Head of caudate nucleus (tissue), 42 donors: ENCODE measurements at regions of chr1 and their contacts with region 1.

Region 1: GRCh38 chr1:201955009-201955728 is at the start of gene TIMM17A:
- DNase-seq: peak; percentile 95 to 99 (median 98)

Region 2: GRCh38 chr1:201828820-201829774 is 126.1 kb before region 1 on chr1 and contains the start of gene IPO9:
- intact Hi-C with region 1: loop called (anchors 5 kb)
- DNase-seq: peak; percentile 85 to 98 (median 94)

Region 3: DNA sequence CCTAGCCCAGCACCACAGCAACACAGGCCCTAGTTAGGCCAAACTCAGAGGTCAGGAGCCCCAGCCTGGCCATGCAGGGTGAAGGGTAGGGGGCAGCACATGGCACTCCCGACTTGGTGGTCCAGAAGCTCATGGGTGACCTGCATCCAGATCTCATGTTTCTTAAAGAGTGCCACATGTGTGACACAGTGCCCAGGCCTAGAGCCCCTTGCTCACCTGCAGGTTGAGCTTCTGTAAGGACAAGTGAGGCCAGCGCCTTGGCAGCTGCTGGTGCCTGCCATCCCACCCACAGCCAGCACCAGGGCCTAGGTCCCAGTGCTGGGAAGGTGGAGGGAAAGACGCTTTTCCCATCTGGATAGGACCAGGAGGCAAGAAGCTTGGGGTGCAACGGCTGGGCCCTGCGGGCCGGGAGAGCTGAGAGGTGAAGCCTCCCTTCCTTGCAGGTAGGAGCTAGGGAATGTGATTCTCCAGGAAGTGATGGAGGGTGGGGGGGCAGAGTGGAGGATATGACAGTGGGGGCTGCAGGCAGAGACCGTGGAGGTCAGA is 60.0 kb before region 1 on chr1:
- intact Hi-C with region 1: no loop called
- DNase-seq: no peak

Region 4: GRCh38 chr1:201999625-202000238 is 44.6 kb after region 1 on chr1:
- intact Hi-C with region 1: no loop called
- DNase-seq: peak in 40 of 42 donors; percentile 12 to 80 (median 54)